ENCODE measurements at regions of chr1 and their contacts with region 1.

Region 1: GRCh38 chr1:111448918-111449702 is at the starts of genes ATP5PB and WDR77:
- DNase-seq: peak; percentile 80 to 97
- ATAC-seq: peak; percentile 95 to 98 (median 97)
- H3K4me3 ChIP-seq: peak within 1 kb of the TSS; percentile 89
- H3K4me3 Mint-ChIP-seq: peak within 1 kb of the TSS; percentile 99
- H3K27ac ChIP-seq: peak within 1 kb of the TSS; percentile 73
- H3K27ac Mint-ChIP-seq: peak within 1 kb of the TSS; percentile 97 to 100
- H3K4me1 ChIP-seq: peaks cover 20% of the 10 kb centered on the region
- H3K4me1 Mint-ChIP-seq: peaks cover 72 to 75% of the 10 kb centered on the region in 2 donors
- H3K27me3 ChIP-seq: no peaks in the 10 kb centered on the region
- H3K27me3 Mint-ChIP-seq: no peaks in the 10 kb centered on the region
- CTCF ChIP-seq: no peak
- total RNA-seq, gene ATP5PB: 105 to 115 (median 105) TPM
- total RNA-seq, gene WDR77: 15.5 to 20.8 (median 17.8) TPM

Region 2: DNA sequence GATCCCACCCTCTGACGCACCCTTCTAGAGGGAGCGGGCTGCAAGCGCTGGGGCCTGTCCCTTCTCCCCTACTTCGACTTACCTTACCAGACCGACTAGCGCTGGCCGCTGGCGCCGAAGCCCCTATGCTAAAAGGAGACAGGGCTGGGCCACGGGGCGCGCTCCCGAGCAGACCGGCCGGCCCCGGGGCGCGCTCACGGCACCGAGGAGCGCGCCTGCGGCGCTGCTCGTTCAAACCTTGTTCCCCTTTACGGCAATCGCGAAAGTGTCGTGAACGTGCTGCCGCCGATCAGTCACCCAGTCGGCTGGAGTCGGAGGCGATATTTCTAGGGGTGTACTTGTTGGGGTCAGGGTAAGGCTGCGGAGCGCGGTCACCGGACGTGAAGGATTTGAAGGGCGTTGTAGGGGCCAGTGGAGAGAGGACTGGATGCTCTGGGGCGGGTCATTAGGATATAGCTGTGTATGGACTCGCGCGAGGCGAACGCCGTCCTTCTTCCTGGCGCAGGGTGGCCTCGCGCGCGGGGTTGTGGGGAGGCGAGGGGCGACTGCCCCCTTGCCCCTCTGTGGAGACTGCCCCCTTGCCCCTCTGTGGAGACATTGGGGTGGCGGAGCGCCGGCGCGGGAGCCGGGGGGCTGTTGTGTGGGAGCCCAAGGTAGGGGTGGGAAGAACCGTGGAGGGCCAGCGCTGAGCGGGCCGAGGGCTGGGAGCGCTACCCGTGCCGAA is 309.0 kb before region 1 on chr1 and contains the starts of genes CEPT1 and DRAM2:
- intact Hi-C with region 1: loop called (anchors 1 kb)
- DNase-seq: peak; percentile 91 to 95
- ATAC-seq: peak; percentile 79 to 96 (median 82)
- H3K4me3 ChIP-seq: peak within 1 kb of the TSS; percentile 88
- H3K4me3 Mint-ChIP-seq: peak within 1 kb of the TSS; percentile 99
- H3K27ac ChIP-seq: peak within 1 kb of the TSS; percentile 96
- H3K27ac Mint-ChIP-seq: peak within 1 kb of the TSS; percentile 91 to 98
- H3K4me1 ChIP-seq: no peaks in the 10 kb centered on the region
- H3K4me1 Mint-ChIP-seq: peaks cover 40 to 48% of the 10 kb centered on the region in 2 donors
- H3K27me3 ChIP-seq: no peaks in the 10 kb centered on the region
- H3K27me3 Mint-ChIP-seq: no peaks in the 10 kb centered on the region
- CTCF ChIP-seq: no peak
- total RNA-seq, gene CEPT1: 35.4 to 49.5 (median 40.9) TPM
- total RNA-seq, gene DRAM2: 35.8 to 40.8 (median 36.4) TPM

Region 3: GRCh38 chr1:111470596-111470995 is 21.5 kb after region 1 on chr1:
- intact Hi-C with region 1: loop called (anchors 1 kb)
- DNase-seq: peak in 1 of 2 donors; percentile 43
- ATAC-seq: peak; percentile 27 to 49 (median 31)
- H3K4me3 ChIP-seq: peak overlapping the region; percentile 6
- H3K4me3 Mint-ChIP-seq: no peak overlapping the region
- H3K27ac ChIP-seq: peak overlapping the region; percentile 86
- H3K27ac Mint-ChIP-seq: no peak overlapping the region
- H3K4me1 ChIP-seq: peaks cover 35% of the 10 kb centered on the region
- H3K4me1 Mint-ChIP-seq: peaks cover 6 to 15% of the 10 kb centered on the region in 2 donors
- H3K27me3 ChIP-seq: no peaks in the 10 kb centered on the region
- H3K27me3 Mint-ChIP-seq: no peaks in the 10 kb centered on the region
- CTCF ChIP-seq: no peak

Region 4: DNA sequence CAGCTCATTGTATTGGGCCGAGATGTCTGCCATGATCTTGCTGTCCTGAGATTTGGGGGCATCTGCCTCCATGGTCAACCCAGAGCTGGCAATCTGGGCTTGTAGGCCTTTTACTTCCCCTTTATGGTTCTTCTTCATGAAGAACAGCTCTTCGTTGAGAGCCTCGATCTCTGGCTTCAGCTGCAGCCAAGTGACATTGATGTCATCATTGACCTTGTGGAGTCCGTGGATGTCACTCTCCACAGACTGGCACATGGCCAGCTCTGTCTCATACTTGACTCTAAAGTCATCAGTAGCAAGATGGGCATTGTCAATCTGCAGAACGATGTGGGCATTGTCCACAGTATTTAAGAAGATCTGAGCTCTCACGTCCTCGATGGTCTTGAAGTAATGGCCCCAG is 199.7 kb after region 1 on chr1:
- intact Hi-C with region 1: no loop called
- DNase-seq: no peak
- ATAC-seq: no peak
- H3K4me3 ChIP-seq: no peak overlapping the region
- H3K4me3 Mint-ChIP-seq: no peak overlapping the region
- H3K27ac ChIP-seq: no peak overlapping the region
- H3K27ac Mint-ChIP-seq: peak overlapping the region; percentile 80 to 90
- H3K4me1 ChIP-seq: peaks cover 26% of the 10 kb centered on the region
- H3K4me1 Mint-ChIP-seq: peaks cover 69 to 70% of the 10 kb centered on the region in 2 donors
- H3K27me3 ChIP-seq: no peaks in the 10 kb centered on the region
- H3K27me3 Mint-ChIP-seq: no peaks in the 10 kb centered on the region
- CTCF ChIP-seq: no peak

Region 5: GRCh38 chr1:111666841-111667270 is 217.7 kb after region 1 on chr1:
- intact Hi-C with region 1: no loop called
- DNase-seq: no peak
- ATAC-seq: no peak
- H3K4me3 ChIP-seq: no peak overlapping the region
- H3K4me3 Mint-ChIP-seq: no peak overlapping the region
- H3K27ac ChIP-seq: no peak overlapping the region
- H3K27ac Mint-ChIP-seq: peak overlapping the region; percentile 28 to 89
- H3K4me1 ChIP-seq: peaks cover 11% of the 10 kb centered on the region
- H3K4me1 Mint-ChIP-seq: peaks cover 62 to 72% of the 10 kb centered on the region in 2 donors
- H3K27me3 ChIP-seq: no peaks in the 10 kb centered on the region
- H3K27me3 Mint-ChIP-seq: no peaks in the 10 kb centered on the region
- CTCF ChIP-seq: no peak